HEK293T (cell line): ENCODE measurements at regions of chr16 and their contacts with region 1.

Region 1: DNA sequence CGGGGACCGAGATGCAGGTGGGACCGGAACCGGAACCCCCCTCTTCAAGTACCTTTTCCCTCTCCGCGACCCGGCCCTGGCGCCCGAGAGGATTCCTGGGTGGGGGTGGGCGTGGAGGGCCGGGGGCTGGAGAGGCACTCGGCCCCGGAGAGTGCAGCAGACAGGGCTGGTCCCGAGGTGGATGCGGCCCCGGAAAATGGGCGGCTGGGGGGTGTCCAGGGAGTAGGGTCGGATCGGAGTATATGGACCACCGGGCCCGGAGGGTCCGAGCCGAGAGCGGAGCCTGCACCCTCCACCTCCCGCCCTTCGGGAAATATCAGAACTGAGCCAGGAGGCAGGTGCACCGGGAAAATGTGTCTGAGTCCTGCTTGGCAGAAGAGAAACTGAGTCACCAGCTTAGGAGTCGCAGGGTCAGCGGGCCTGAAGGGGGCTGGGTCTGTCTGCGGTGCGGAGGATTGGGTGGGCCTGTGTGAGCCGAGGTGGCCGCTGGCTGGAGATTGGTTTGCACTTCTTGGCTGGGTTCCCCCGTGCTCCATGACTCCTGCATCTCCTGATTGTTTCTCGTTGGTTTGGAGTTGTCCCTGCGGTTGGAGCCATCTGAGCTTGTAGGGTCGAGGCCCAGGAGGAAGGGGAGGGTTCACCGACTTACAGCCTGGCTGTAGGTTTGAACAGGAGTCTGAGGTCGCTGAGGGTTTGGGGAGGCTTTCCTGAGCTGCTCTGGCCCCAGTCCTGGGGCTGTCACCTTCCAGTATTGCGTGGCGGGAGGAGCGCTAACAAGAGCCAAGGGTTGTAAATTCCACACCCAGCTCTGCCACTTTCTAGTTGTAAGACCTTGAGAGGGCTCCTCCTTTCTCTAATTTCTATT is 518 bp downstream of the SH2B1 start:
- DNase-seq: no peak

Region 2: DNA sequence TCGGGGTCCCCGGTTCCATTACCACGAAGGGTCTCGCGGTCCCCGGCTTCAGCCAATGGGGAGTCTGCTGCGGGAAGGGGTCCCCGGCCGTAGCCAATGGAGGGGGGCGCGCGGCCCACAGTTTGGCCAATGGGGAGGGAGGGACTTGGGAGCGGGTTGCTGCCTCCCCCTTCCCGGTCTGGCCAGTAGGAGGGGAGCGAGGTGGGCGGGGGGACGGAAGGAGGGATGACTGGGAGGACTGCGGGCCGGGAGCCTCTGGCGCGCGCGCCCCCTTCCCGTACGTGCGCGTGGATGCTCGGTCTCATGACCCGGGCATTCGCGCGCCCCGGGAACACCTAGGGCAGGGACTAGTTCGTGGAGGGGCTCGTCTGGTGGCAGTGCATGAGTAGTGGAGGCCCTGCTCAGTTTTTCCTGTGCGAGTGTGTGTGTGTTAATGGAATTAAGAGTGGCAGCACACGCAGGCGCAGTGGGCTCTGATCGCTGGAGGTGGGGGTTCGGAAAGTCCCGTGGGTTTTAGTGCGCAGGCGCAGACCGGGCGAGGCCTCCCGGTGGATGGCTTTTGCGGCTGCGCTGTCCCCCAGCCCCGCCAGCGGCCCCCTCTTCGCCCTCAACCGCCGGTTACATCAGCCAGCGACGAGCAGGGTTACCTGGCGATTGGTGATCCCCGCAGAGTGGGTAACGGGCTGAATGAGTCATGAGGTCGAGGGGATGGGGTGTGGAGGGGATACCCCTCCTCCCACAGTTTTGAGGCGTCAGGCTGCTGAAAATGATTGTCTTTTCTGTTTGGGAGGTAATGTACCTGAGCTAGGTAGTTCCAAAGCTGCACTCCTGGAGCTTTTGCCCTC is 40.1 kb before region 1 on chr16:
- CTCF ChIA-PET with region 1: no interaction called
- POLR2A ChIA-PET with region 1: interaction called, 40 read pairs
- DNase-seq: peak; percentile 93

Region 3: GRCh38 chr16:28835867-28836744 is 28.1 kb before region 1 on chr16:
- CTCF ChIA-PET with region 1: no interaction called
- POLR2A ChIA-PET with region 1: interaction called, 10 read pairs
- DNase-seq: no peak

Region 4: DNA sequence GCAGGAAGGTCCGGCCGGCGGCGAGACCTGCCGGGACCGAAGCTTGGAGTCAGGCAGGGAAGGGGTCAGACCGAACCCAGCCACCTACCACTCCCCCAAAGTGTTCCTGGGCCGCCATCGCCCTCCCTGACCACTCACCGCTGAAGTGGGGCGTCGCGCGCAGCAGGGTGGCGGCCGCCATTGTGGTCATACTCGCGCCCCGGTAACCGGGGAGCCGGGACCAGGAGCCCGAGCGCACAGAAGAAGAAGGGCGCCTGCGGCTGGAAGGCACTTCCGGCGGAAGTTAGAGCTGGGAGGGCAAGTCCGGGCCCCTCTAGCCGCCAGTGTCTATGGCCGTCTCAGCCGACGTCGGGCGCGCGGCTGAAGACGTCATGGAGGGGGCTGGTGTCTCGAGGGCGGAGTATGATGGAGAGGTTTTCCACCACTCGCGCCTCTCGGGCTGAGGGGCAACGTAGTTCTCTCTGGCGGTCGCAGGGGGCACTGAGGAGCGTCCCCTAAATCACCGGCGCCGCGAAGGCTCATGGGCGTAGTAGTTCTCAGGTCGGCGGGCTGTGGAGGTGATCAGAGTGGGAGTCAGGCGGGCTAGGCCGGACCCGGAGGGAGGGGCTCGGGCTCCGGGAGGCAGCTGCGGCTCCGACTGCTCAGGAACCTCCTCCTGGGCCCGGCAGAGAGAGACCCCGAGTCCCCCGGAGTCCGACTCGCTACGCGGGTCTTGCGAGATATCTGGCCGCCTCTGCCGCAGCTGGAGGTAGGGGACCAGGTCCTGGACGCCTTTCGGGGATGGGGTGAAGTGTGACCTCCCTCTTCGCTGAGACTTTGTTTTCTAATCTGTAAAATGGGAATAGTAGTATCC is 17.9 kb before region 1 on chr16 and contains the start of gene TUFM:
- CTCF ChIA-PET with region 1: interaction called, 6 read pairs
- POLR2A ChIA-PET with region 1: interaction called, 96 read pairs
- DNase-seq: peak; percentile 96

Region 5: DNA sequence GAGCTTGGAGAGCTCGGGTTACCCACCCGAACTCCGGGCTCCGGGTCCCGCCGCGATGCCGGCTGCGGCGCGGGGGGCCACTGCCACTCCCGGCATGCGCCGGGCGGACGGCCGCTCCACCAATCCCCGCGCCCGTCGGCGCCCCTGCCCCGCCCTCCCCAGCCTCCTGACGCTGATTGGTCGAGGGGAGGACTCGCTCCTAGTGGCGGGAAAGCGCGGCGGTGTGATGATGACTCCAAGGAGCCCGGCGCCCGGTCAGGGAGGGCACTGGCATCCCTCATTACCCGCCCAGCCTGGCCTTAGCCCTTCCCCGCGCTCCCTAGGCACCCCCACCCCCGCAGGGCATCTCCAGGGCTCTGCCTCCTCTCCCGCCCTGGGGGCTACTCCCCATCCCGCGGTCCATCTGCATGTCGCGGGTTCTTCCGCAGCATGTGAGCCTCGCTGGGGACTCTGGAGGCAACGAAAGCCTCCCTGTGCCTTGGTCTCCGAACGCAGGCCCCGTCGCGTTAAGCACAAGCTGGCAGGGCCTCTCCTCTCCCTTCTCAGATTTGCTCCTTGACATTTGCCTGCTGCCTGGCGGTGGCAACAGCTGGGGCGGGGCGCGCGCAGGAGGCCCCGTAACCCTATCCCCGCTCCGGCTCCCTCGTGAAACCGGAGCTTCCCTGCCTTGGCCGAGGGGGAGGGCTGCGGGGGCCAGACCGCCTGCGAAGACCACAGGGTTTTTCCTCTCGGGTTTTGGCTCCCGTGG is 15.9 kb after region 1 on chr16:
- CTCF ChIA-PET with region 1: no interaction called
- POLR2A ChIA-PET with region 1: interaction called, 17 read pairs
- DNase-seq: peak; percentile 95

Region 6: GRCh38 chr16:28910086-28911031 is 46.2 kb after region 1 on chr16:
- CTCF ChIA-PET with region 1: no interaction called
- POLR2A ChIA-PET with region 1: no interaction called
- DNase-seq: no peak